Panc1 (cell line): ENCODE measurements at regions of chr5 and their contacts with region 1.

Region 1: DNA sequence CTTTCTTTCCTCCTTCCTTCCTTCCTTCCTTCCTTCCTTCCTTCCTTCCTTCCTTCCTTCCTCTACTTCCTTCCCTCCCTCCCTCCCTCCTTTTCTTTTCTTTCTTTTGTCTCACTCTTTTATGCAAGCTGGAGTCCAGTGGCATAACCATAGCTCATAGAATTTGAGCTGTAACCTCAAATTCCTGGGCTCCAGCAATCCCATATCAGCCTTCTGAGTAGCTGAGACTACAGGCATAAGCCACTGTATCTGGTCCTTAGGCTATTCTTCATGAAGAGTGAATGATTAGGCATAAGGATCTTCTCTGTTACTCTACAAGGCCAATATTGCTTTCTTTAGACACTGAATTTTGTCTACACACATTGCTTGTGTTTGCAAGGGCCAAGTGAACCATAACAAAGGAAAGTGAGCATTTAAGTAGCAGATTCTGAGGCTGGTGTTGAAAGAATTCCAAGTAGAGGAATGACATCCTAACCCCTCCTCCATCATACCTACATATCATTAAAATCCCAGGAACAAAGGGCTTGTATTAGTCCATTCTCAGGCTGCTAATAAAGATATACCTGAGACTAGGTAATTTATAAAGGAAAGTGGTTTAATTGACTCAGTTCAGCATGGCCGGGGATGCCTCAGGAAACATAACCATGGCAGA is 293.2 kb downstream of the HCN1 start:
- DNase-seq: no peak
- ATAC-seq: no peak
- H3K4me3 ChIP-seq: no peak overlapping the region
- H3K27ac ChIP-seq: no peak overlapping the region
- H3K4me1 ChIP-seq: no peaks in the 10 kb centered on the region
- H3K27me3 ChIP-seq: no peaks in the 10 kb centered on the region
- CTCF ChIP-seq: no peak

Region 2: GRCh38 chr5:44974813-44975212 is 428.1 kb before region 1 on chr5:
- CTCF ChIA-PET with region 1: no interaction called
- POLR2A ChIA-PET with region 1: no interaction called
- in situ Hi-C with region 1: no loop called
- intact Hi-C with region 1: no loop called
- DNase-seq: no peak
- ATAC-seq: no peak
- H3K4me3 ChIP-seq: no peak overlapping the region
- H3K27ac ChIP-seq: no peak overlapping the region
- H3K4me1 ChIP-seq: no peaks in the 10 kb centered on the region
- H3K27me3 ChIP-seq: no peaks in the 10 kb centered on the region
- CTCF ChIP-seq: no peak

Region 3: GRCh38 chr5:45252991-45253390 is 149.9 kb before region 1 on chr5:
- CTCF ChIA-PET with region 1: interaction called, 21 read pairs
- POLR2A ChIA-PET with region 1: no interaction called
- in situ Hi-C with region 1: no loop called
- intact Hi-C with region 1: no loop called
- DNase-seq: no peak
- ATAC-seq: no peak
- H3K4me3 ChIP-seq: no peak overlapping the region
- H3K27ac ChIP-seq: no peak overlapping the region
- H3K4me1 ChIP-seq: no peaks in the 10 kb centered on the region
- H3K27me3 ChIP-seq: no peaks in the 10 kb centered on the region
- CTCF ChIP-seq: no peak

Region 4: GRCh38 chr5:45696206-45696836 is 293.4 kb after region 1 on chr5 and contains the start of gene HCN1:
- CTCF ChIA-PET with region 1: no interaction called
- POLR2A ChIA-PET with region 1: no interaction called
- in situ Hi-C with region 1: no loop called
- intact Hi-C with region 1: no loop called
- DNase-seq: peak; percentile 17
- ATAC-seq: peak; percentile 100
- H3K4me3 ChIP-seq: peak within 1 kb of the TSS; percentile 24 to 44
- H3K27ac ChIP-seq: no peak within 1 kb of the TSS
- H3K4me1 ChIP-seq: no peaks in the 10 kb centered on the region
- H3K27me3 ChIP-seq: peaks cover 6% of the 10 kb centered on the region
- CTCF ChIP-seq: peak; percentile 91
- total RNA-seq, gene HCN1: 0.36 TPM